GM12878 (cell line): ENCODE measurements at regions of chr19 and their contacts with region 1.

Region 1: GRCh38 chr19:1875646-1876495 is 9.4 kb downstream of the ABHD17A start:
- DNase-seq: peak; percentile 51
- ATAC-seq: peak; percentile 98
- H3K4me3 ChIP-seq: peak overlapping the region; percentile 89
- H3K27ac ChIP-seq: peak overlapping the region; percentile 93
- H3K4me1 ChIP-seq: peaks cover 3% of the 10 kb centered on the region; the same call in 1 of the 2 replicates
- H3K27me3 ChIP-seq: no peaks in the 10 kb centered on the region
- CTCF ChIP-seq: no peak
- EP300 ChIP-seq: peak in 1 of 2 experiments; percentile 44; a peak in 1 of 4 replicates
- POLR2A ChIP-seq: peak; percentile 96
- RAD21 ChIP-seq: no peak

Region 2: GRCh38 chr19:1438035-1438932 is 437.6 kb before region 1 on chr19 and contains the start of gene RPS15:
- CTCF ChIA-PET with region 1: no interaction called
- POLR2A ChIA-PET with region 1: no interaction called
- RAD21 ChIA-PET with region 1: no interaction called
- SMC1A ChIA-PET with region 1: no interaction called
- in situ Hi-C with region 1: no loop called
- intact Hi-C with region 1: no loop called
- DNase-seq: peak; percentile 84
- ATAC-seq: peak; percentile 91
- H3K4me3 ChIP-seq: peak within 1 kb of the TSS; percentile 98
- H3K27ac ChIP-seq: peak within 1 kb of the TSS; percentile 93
- H3K4me1 ChIP-seq: peaks cover 8% of the 10 kb centered on the region
- H3K27me3 ChIP-seq: no peaks in the 10 kb centered on the region
- CTCF ChIP-seq: peak; percentile 97 to 99 (median 97); a peak in 5 of 6 replicates
- EP300 ChIP-seq: peak in 1 of 2 experiments; percentile 50; a peak in 1 of 4 replicates
- POLR2A ChIP-seq: peak; percentile 100
- RAD21 ChIP-seq: peak; percentile 31; the same call in 1 of the 2 replicates
- polyA plus RNA-seq, gene RPS15: 559 to 717 TPM

Region 3: GRCh38 chr19:1856698-1857603 is 18.9 kb before region 1 on chr19:
- CTCF ChIA-PET with region 1: no interaction called
- POLR2A ChIA-PET with region 1: interaction called, 15 read pairs
- RAD21 ChIA-PET with region 1: interaction called, 6 read pairs
- SMC1A ChIA-PET with region 1: no interaction called
- in situ Hi-C with region 1: no loop called
- intact Hi-C with region 1: no loop called
- DNase-seq: no peak
- ATAC-seq: peak; percentile 63
- H3K4me3 ChIP-seq: peak overlapping the region; percentile 82
- H3K27ac ChIP-seq: peak overlapping the region; percentile 87
- H3K4me1 ChIP-seq: peaks cover 24% of the 10 kb centered on the region
- H3K27me3 ChIP-seq: no peaks in the 10 kb centered on the region
- CTCF ChIP-seq: no peak
- EP300 ChIP-seq: no peak
- POLR2A ChIP-seq: peak; percentile 57
- RAD21 ChIP-seq: no peak